ENCODE measurements at regions of chr3 and their contacts with region 1.

Region 1: DNA sequence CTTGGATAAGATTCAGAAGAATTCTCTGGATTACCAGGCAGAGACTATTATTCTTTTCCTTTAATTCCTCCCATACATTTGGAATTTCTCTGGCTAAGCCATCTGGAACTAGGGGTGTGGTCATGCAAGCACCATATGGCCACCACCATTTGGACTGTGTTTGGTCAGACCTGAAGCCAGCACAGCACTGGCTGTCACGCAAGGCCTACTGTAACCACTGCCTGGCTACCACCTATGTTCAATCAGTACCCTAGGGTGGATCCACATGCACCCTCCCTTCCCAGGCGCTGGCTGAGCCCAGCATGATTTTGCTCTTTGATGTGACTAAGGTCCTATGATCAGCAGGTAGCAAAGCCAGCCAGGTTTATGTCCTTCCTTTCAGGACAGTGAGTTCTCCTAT is 287.8 kb upstream of the GOLIM4 start:
- DNase-seq: no peak
- ATAC-seq: no peak
- H3K4me3 ChIP-seq: no peak overlapping the region
- H3K4me3 Mint-ChIP-seq: no peak overlapping the region
- H3K27ac ChIP-seq: no peak overlapping the region
- H3K27ac Mint-ChIP-seq: no peak overlapping the region
- H3K4me1 ChIP-seq: no peaks in the 10 kb centered on the region
- H3K4me1 Mint-ChIP-seq: no peaks in the 10 kb centered on the region
- H3K27me3 ChIP-seq: no peaks in the 10 kb centered on the region
- H3K27me3 Mint-ChIP-seq: no peaks in the 10 kb centered on the region

Region 2: DNA sequence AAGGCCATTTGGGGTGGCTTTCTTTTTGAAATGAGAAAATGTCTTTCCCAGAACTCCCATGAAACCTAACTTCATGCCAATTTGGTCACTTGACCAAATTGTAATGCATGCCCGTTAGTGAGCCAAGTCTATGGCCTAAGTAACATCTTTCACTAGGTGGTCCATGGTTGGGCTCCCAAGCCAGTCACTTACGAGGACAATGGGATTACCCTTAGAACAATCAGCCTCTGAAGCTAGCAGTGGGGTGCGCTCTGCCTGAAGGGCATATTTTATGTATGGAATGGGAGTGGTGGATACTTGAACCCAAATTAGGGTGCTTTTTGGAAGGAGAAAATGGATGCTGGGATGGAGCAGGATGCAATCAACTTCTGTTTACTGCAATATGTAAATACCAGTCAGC is 160.5 kb before region 1 on chr3:
- CTCF ChIA-PET with region 1: no interaction called
- POLR2A ChIA-PET with region 1: no interaction called
- DNase-seq: no peak
- ATAC-seq: no peak
- H3K4me3 ChIP-seq: no peak overlapping the region
- H3K4me3 Mint-ChIP-seq: no peak overlapping the region
- H3K27ac ChIP-seq: no peak overlapping the region
- H3K27ac Mint-ChIP-seq: no peak overlapping the region
- H3K4me1 ChIP-seq: no peaks in the 10 kb centered on the region
- H3K4me1 Mint-ChIP-seq: no peaks in the 10 kb centered on the region
- H3K27me3 ChIP-seq: peaks cover 0 to 1% of the 10 kb centered on the region in 2 experiments
- H3K27me3 Mint-ChIP-seq: peaks cover 8% of the 10 kb centered on the region in 2 donors

Region 3: DNA sequence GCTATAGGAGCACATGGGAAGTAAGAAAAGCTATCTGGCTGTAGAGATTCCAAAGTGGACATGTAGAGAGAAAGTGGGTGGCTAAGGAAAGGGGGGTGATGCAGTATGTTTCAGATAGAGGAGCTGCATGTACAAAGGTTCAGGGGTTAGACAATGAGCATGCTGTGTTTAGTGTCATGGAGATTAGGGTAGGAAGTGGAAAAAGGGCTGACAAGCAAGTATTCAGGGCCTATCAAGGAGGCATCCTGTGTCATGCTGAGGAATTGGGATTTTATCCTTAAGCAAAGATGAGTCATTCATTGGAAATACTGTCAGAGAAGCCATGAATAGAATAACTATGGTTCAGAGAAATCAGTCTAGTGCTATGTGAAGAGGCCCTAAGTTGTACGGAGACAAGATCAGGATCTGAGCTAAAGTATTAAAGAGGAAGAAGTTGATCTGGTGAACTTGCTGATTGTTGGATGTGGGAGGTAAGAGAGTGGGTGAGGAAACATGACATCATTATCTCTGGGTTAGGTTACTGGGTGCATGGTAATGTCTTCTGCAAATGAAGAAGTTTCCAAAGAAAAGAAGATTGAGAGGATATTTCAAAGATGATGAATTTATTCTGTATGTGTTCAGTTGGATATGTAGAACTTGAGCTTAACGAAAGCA is 111.1 kb before region 1 on chr3:
- CTCF ChIA-PET with region 1: no interaction called
- POLR2A ChIA-PET with region 1: interaction called in 1 of 2 experiments, 12 read pairs
- DNase-seq: no peak
- ATAC-seq: no peak
- H3K4me3 ChIP-seq: no peak overlapping the region
- H3K4me3 Mint-ChIP-seq: no peak overlapping the region
- H3K27ac ChIP-seq: no peak overlapping the region
- H3K27ac Mint-ChIP-seq: no peak overlapping the region
- H3K4me1 ChIP-seq: no peaks in the 10 kb centered on the region
- H3K4me1 Mint-ChIP-seq: no peaks in the 10 kb centered on the region
- H3K27me3 ChIP-seq: no peaks in the 10 kb centered on the region
- H3K27me3 Mint-ChIP-seq: no peaks in the 10 kb centered on the region

Region 4: DNA sequence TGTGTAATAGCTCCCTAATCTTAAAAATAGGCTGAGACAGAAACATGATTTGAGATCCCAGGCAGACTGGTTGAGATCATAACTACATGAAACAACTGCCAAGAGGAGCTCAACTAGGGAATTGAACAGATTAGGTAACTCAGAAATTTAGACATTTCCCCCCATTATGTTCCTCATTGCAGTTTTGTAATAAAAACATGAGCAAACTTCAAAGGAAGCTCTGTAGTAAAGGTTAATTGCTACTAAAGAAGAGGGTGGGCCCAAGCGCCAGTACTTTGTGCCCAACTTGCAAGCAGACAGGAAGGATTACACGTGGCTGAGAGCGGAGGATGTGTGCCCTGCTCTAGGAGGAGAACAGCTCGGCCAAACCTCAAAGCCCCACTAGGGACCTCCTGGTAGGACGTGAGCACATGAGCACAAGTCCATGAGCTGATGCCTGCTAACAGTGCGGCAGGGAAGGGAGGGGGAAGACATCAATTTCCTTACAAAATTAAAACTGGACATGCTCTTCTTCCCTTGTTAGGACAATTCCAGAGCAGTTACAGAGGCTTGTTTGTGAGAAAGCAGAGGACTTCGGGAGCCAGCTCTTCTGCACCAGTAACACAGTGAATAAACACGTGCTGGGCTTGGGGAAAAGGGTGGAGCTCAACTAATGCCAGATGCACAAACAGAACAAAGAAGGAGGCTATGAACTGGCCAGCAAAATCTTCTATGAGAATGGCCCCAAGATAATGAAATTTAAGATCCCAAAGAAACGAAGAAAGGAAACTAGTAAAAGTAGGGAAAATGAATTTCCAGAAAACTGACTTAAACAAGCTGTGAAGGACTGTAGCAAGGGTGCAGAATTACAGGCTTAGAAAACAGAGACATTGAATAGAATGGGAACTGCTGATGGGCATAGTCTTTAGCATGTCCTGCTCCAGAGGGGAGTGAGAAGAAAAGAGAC is 1004.5 kb after region 1 on chr3:
- CTCF ChIA-PET with region 1: no interaction called
- POLR2A ChIA-PET with region 1: no interaction called
- DNase-seq: no peak
- ATAC-seq: no peak
- H3K4me3 ChIP-seq: no peak overlapping the region
- H3K4me3 Mint-ChIP-seq: no peak overlapping the region
- H3K27ac ChIP-seq: no peak overlapping the region
- H3K27ac Mint-ChIP-seq: no peak overlapping the region
- H3K4me1 ChIP-seq: no peaks in the 10 kb centered on the region
- H3K4me1 Mint-ChIP-seq: no peaks in the 10 kb centered on the region
- H3K27me3 ChIP-seq: no peaks in the 10 kb centered on the region
- H3K27me3 Mint-ChIP-seq: peaks cover 5 to 6% of the 10 kb centered on the region in 2 donors